Caco-2 (cell line): ENCODE measurements at regions of chr3 and their contacts with region 1.

Region 1: DNA sequence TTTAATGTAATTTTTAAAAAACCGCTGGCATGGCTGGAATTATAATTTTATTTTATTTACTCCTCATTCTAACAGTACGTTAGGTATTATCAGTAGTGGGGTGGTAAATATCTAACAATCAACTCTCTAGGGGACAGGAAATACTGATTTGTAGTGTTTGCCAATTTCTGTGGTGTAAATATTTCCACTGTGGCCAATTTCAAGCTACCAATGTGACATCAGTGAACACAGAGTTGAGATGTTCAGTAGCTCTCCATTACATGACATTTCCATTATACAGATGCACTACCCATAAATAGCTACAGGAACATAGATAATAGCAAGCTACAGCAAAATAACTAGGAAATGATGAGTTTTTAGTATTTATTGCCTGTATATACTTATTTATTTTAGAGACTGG is 10.0 kb upstream of the ARL8B start:
- DNase-seq: no peak
- H3K4me3 ChIP-seq: no peak overlapping the region
- H3K4me3 Mint-ChIP-seq: no peak overlapping the region
- H3K27ac Mint-ChIP-seq: no peak overlapping the region
- H3K4me1 ChIP-seq: peaks cover 19% of the 10 kb centered on the region
- H3K4me1 Mint-ChIP-seq: peaks cover 6% of the 10 kb centered on the region
- H3K27me3 ChIP-seq: no peaks in the 10 kb centered on the region
- H3K27me3 Mint-ChIP-seq: no peaks in the 10 kb centered on the region
- CTCF ChIP-seq: no peak

Region 2: GRCh38 chr3:5090197-5090596 is 21.8 kb before region 1 on chr3:
- CTCF ChIA-PET with region 1: no interaction called
- POLR2A ChIA-PET with region 1: no interaction called
- intact Hi-C with region 1: loop called (anchors 2 kb)
- DNase-seq: no peak
- H3K4me3 ChIP-seq: no peak overlapping the region
- H3K4me3 Mint-ChIP-seq: no peak overlapping the region
- H3K27ac Mint-ChIP-seq: no peak overlapping the region
- H3K4me1 ChIP-seq: peaks cover 12% of the 10 kb centered on the region
- H3K4me1 Mint-ChIP-seq: peaks cover 12% of the 10 kb centered on the region
- H3K27me3 ChIP-seq: no peaks in the 10 kb centered on the region
- H3K27me3 Mint-ChIP-seq: no peaks in the 10 kb centered on the region
- CTCF ChIP-seq: no peak

Region 3: DNA sequence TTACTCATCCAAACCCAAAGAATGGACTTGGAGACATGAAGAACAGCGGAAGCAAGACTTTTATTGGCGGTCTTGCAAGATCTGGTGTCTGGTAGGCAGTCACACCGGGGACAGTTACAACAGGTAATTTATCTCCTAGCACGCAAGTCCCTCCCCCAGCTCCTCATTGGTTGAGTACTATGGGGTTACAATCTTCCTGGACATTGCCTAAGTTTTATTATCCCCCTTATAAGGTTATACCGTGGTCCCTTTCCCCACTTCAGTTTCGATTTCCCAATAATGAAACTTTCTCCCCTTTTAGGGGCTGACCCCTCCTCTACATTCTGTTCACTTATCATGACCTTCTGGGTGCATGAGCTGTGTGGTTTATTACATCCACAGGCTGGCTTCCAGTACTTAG is 28.8 kb after region 1 on chr3:
- CTCF ChIA-PET with region 1: no interaction called
- POLR2A ChIA-PET with region 1: no interaction called
- intact Hi-C with region 1: no loop called
- DNase-seq: no peak
- H3K4me3 ChIP-seq: no peak overlapping the region
- H3K4me3 Mint-ChIP-seq: no peak overlapping the region
- H3K27ac Mint-ChIP-seq: peak overlapping the region; percentile 30
- H3K4me1 ChIP-seq: peaks cover 35% of the 10 kb centered on the region
- H3K4me1 Mint-ChIP-seq: peaks cover 36% of the 10 kb centered on the region
- H3K27me3 ChIP-seq: no peaks in the 10 kb centered on the region
- H3K27me3 Mint-ChIP-seq: no peaks in the 10 kb centered on the region
- CTCF ChIP-seq: no peak